Heart right ventricle (tissue), 16 donors: ENCODE measurements at regions of chr1 and their contacts with region 1.

Region 1: DNA sequence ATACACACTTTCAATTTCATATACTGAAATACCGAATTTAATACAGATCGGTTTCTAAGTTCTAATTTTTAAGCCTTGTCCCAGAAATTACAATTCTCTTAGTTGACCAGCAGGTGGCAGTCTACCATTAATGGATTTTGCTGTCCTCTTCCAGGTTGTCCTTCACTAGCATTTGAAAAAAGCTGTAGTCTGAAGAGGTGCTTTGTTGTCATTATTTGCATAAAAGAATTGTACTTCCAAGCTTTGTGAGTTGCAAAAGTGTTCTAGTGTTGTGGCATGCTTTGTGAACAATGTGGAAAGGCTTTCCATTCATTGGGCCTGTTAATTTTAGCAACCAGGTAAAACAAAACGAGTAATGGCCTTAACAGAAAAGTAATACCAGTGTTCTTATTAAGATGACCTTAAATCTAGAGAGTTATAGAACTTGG is 193.6 kb downstream of the RPS6KC1 start:
- DNase-seq: peak in 1 of 2 donors; percentile 33
- ATAC-seq: no peak
- H3K4me3 ChIP-seq: no peak overlapping the region
- H3K27ac ChIP-seq: no peak overlapping the region
- H3K4me1 ChIP-seq: no peaks in the 10 kb centered on the region
- H3K27me3 ChIP-seq: no peaks in the 10 kb centered on the region
- CTCF ChIP-seq: peak; percentile 67 to 87 (median 79)

Region 2: DNA sequence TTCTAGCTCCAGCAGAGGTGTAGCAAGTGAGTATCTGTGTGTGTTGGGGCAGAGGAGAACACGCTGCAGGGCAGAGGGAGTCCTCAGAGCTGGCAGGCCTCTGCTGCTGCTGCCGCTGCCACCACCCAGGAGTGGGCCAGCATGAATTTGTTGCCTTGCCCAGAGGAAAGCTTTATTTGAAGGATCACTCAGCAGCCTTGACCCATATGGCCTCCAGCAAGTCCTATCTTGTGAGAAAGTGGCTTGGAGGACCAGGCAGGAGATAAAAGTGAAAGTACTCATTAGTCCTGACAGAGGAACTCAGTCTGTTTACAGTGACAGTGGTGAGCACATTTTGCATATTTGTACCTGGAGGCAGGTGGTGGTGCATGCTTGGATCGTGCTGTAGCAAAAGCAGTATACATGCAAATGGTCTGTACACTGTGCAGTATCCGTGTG is 1914.9 kb before region 1 on chr1:
- intact Hi-C with region 1: loop called in 1 of 10 experiments (anchors 5 kb)
- DNase-seq: no peak
- ATAC-seq: no peak
- H3K4me3 ChIP-seq: peak overlapping the region in 1 of 10 donors; percentile 8
- H3K27ac ChIP-seq: peak overlapping the region in 1 of 10 donors; percentile 43
- H3K4me1 ChIP-seq: peaks cover 6 to 60% (median 31%) of the 10 kb centered on the region in 9 donors
- H3K27me3 ChIP-seq: no peaks in the 10 kb centered on the region
- CTCF ChIP-seq: no peak

Region 3: GRCh38 chr1:213122514-213122929 is 122.2 kb before region 1 on chr1:
- intact Hi-C with region 1: loop called in 2 of 10 experiments (anchors 10 kb)
- DNase-seq: no peak
- ATAC-seq: no peak
- H3K4me3 ChIP-seq: no peak overlapping the region
- H3K27ac ChIP-seq: no peak overlapping the region
- H3K4me1 ChIP-seq: peaks cover 0 to 13% (median 6%) of the 10 kb centered on the region in 9 donors
- H3K27me3 ChIP-seq: no peaks in the 10 kb centered on the region
- CTCF ChIP-seq: peak; percentile 36 to 74 (median 63)

Region 4: DNA sequence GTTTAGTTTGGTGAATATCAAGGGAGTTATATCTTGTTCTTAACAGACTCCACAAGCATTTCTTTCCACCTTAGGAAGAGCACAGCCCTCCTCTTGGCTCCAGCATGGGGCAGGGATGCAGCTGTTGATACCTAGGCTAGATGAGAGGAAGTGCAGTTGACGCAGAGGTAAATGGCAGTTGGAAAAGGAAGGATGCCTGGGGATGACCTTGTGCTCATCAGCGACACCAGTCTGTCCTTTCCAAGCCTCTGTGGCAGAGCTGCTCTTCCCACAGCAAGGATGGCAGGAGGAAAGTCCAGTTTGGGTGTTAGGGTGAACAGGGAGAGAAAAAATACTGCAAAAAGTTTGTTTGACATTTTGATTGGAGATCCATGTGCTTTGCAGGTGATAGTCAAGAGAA is 749.3 kb after region 1 on chr1:
- intact Hi-C with region 1: loop called in 1 of 10 experiments (anchors 5 kb)
- DNase-seq: no peak
- ATAC-seq: peak in 1 of 8 donors; percentile 23
- H3K4me3 ChIP-seq: no peak overlapping the region
- H3K27ac ChIP-seq: peak overlapping the region in 5 of 10 donors; percentile 9 to 30 (median 19)
- H3K4me1 ChIP-seq: peaks cover 0 to 31% (median 14%) of the 10 kb centered on the region in 9 donors
- H3K27me3 ChIP-seq: peaks cover 0 to 39% (median 5%) of the 10 kb centered on the region in 7 donors
- CTCF ChIP-seq: no peak